IMR-90 (cell line): ENCODE measurements at regions of chr5 and their contacts with region 1.

Region 1: GRCh38 chr5:103209065-103209464 is 49.5 kb upstream of the MACIR start:
- DNase-seq: no peak
- ATAC-seq: no peak
- H3K4me3 ChIP-seq: no peak overlapping the region
- H3K27ac ChIP-seq: no peak overlapping the region
- H3K4me1 ChIP-seq: peaks cover 4% of the 10 kb centered on the region; the same call in 1 of the 2 replicates
- H3K27me3 ChIP-seq: no peaks in the 10 kb centered on the region
- CTCF ChIP-seq: no peak
- POLR2A ChIP-seq: no peak
- RAD21 ChIP-seq: no peak

Region 2: DNA sequence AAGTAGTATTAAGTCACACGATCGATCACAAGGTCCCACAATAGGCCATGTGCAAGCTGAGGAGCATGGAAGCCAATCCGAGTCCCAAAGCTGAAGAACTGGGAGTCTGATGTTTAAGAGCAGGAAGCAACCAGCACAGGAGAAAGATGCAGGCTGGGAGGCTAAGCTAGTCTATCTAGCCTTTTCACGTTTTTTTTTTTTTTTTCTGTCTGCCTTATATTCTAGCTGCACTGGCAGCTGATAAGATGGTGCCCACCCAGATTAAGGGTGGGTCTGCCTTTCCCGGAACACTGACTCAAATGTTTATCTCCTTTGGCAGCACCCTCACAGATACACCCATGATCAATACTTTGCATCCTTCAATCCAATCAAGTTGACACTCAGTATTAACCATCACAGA is 82.5 kb before region 1 on chr5:
- CTCF ChIA-PET with region 1: no interaction called
- POLR2A ChIA-PET with region 1: interaction called, 13 read pairs
- dilution Hi-C with region 1: no loop called
- in situ Hi-C with region 1: no loop called
- intact Hi-C with region 1: no loop called
- DNase-seq: no peak
- ATAC-seq: no peak
- H3K4me3 ChIP-seq: no peak overlapping the region
- H3K27ac ChIP-seq: no peak overlapping the region
- H3K4me1 ChIP-seq: no peaks in the 10 kb centered on the region; the same call in 1 of the 2 replicates
- H3K27me3 ChIP-seq: no peaks in the 10 kb centered on the region
- CTCF ChIP-seq: no peak
- POLR2A ChIP-seq: no peak
- RAD21 ChIP-seq: no peak